ENCODE measurements at regions of chr10 and their contacts with region 1.

Region 1: GRCh38 chr10:61822781-61823230 is 78.7 kb upstream of the ARID5B start:
- DNase-seq: no peak
- ATAC-seq: no peak
- H3K4me3 ChIP-seq: no peak overlapping the region
- H3K27ac ChIP-seq: no peak overlapping the region
- H3K4me1 ChIP-seq: no peaks in the 10 kb centered on the region
- H3K27me3 ChIP-seq: no peaks in the 10 kb centered on the region
- CTCF ChIP-seq: no peak
- POLR2A ChIP-seq: no peak
- RAD21 ChIP-seq: no peak

Region 2: GRCh38 chr10:61475449-61475873 is 347.3 kb before region 1 on chr10:
- CTCF ChIA-PET with region 1: no interaction called
- POLR2A ChIA-PET with region 1: no interaction called
- RAD21 ChIA-PET with region 1: no interaction called
- intact Hi-C with region 1: loop called (anchors 10 kb)
- DNase-seq: no peak
- ATAC-seq: no peak
- H3K4me3 ChIP-seq: no peak overlapping the region
- H3K27ac ChIP-seq: no peak overlapping the region
- H3K4me1 ChIP-seq: no peaks in the 10 kb centered on the region
- H3K27me3 ChIP-seq: no peaks in the 10 kb centered on the region
- CTCF ChIP-seq: no peak
- POLR2A ChIP-seq: no peak
- RAD21 ChIP-seq: no peak

Measured in HCT116 (cell line).